Mammary epithelial cell (primary cell): ENCODE measurements at regions of chr19 and their contacts with region 1.

Region 1: GRCh38 chr19:33406521-33407139 is 33.1 kb downstream of the CEBPG start:
- DNase-seq: peak; percentile 28
- H3K4me3 ChIP-seq: no peak overlapping the region
- H3K27ac ChIP-seq: no peak overlapping the region
- H3K4me1 ChIP-seq: no peaks in the 10 kb centered on the region
- H3K27me3 ChIP-seq: no peaks in the 10 kb centered on the region
- CTCF ChIP-seq: peak; percentile 83 to 89

Region 2: DNA sequence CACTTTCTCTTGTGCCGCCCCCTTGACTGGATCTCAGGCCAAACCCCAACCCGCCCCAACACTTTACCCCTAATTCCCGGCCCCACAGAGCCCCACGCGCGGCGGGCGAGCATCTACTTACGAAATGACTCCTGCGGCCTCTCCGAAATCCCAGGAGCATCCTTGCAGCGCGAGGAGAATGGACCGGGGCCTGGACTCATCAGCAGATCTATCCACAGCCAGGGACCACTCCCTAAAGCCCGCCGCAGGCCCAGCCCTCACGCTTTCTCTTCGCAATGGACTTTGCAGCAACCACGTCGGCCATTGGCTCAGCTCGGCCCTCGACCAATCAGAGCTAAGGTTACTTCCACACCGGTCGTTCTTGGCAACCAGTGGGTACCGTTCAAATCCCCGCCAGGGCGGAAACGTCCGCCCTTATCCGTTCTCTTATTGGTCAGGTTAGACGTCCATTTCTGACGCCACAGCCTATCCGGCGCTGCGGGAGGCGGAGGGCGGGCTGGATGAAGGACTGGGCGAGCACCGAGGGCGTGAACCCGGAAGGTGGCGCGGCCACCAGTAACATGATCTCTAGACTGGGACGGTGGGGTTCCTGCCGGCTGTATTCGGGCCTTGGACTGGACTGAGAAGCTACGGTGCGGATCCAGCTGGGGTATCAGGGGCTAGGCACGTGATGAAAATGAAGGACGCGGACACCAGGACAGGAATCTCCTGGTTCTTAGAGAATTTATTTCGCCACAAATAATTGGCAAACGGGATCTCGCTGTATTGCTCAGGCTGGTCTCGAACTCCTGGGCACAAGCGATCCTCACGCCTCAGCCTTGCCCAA is 434.7 kb before region 1 on chr19 and contains the starts of genes CEP89 and FAAP24:
- CTCF ChIA-PET with region 1: no interaction called
- dilution Hi-C with region 1: no loop called
- in situ Hi-C with region 1: no loop called
- intact Hi-C with region 1: loop called (anchors 10 kb)
- DNase-seq: peak; percentile 99
- H3K4me3 ChIP-seq: peak within 1 kb of the TSS; percentile 60 to 92 (median 83)
- H3K27ac ChIP-seq: peak within 1 kb of the TSS; percentile 81
- H3K4me1 ChIP-seq: peaks cover 2% of the 10 kb centered on the region
- H3K27me3 ChIP-seq: no peaks in the 10 kb centered on the region
- CTCF ChIP-seq: no peak
- total RNA-seq, gene CEP89: 17.0 to 25.7 TPM
- total RNA-seq, gene FAAP24: 4.3 to 6.4 TPM

Region 3: GRCh38 chr19:33143897-33144405 is 262.7 kb before region 1 on chr19:
- CTCF ChIA-PET with region 1: no interaction called
- dilution Hi-C with region 1: no loop called
- in situ Hi-C with region 1: no loop called
- intact Hi-C with region 1: loop called (anchors 2 kb)
- DNase-seq: peak; percentile 25
- H3K4me3 ChIP-seq: no peak overlapping the region
- H3K27ac ChIP-seq: no peak overlapping the region
- H3K4me1 ChIP-seq: no peaks in the 10 kb centered on the region
- H3K27me3 ChIP-seq: no peaks in the 10 kb centered on the region
- CTCF ChIP-seq: peak; percentile 91 to 93

Region 4: GRCh38 chr19:33241530-33242101 is 165.0 kb before region 1 on chr19:
- CTCF ChIA-PET with region 1: no interaction called
- dilution Hi-C with region 1: loop called (anchors 25 kb)
- in situ Hi-C with region 1: loop called (anchors 5 kb)
- intact Hi-C with region 1: loop called (anchors 1 kb)
- DNase-seq: peak; percentile 46
- H3K4me3 ChIP-seq: no peak overlapping the region
- H3K27ac ChIP-seq: no peak overlapping the region
- H3K4me1 ChIP-seq: peaks cover 10% of the 10 kb centered on the region
- H3K27me3 ChIP-seq: no peaks in the 10 kb centered on the region
- CTCF ChIP-seq: peak; percentile 25 to 70

Region 5: GRCh38 chr19:33332248-33332647 is 74.4 kb before region 1 on chr19:
- CTCF ChIA-PET with region 1: interaction called, 3 read pairs
- dilution Hi-C with region 1: no loop called
- in situ Hi-C with region 1: no loop called
- intact Hi-C with region 1: loop called (anchors 1 kb)
- DNase-seq: no peak
- H3K4me3 ChIP-seq: no peak overlapping the region
- H3K27ac ChIP-seq: no peak overlapping the region
- H3K4me1 ChIP-seq: no peaks in the 10 kb centered on the region
- H3K27me3 ChIP-seq: no peaks in the 10 kb centered on the region
- CTCF ChIP-seq: no peak

Region 6: GRCh38 chr19:33358408-33358807 is 48.2 kb before region 1 on chr19:
- CTCF ChIA-PET with region 1: no interaction called
- dilution Hi-C with region 1: no loop called
- in situ Hi-C with region 1: no loop called
- intact Hi-C with region 1: no loop called
- DNase-seq: peak; percentile 75
- H3K4me3 ChIP-seq: no peak overlapping the region
- H3K27ac ChIP-seq: peak overlapping the region; percentile 61
- H3K4me1 ChIP-seq: peaks cover 10% of the 10 kb centered on the region
- H3K27me3 ChIP-seq: no peaks in the 10 kb centered on the region
- CTCF ChIP-seq: no peak